ENCODE measurements at regions of chr1 and their contacts with region 1.

Region 1: DNA sequence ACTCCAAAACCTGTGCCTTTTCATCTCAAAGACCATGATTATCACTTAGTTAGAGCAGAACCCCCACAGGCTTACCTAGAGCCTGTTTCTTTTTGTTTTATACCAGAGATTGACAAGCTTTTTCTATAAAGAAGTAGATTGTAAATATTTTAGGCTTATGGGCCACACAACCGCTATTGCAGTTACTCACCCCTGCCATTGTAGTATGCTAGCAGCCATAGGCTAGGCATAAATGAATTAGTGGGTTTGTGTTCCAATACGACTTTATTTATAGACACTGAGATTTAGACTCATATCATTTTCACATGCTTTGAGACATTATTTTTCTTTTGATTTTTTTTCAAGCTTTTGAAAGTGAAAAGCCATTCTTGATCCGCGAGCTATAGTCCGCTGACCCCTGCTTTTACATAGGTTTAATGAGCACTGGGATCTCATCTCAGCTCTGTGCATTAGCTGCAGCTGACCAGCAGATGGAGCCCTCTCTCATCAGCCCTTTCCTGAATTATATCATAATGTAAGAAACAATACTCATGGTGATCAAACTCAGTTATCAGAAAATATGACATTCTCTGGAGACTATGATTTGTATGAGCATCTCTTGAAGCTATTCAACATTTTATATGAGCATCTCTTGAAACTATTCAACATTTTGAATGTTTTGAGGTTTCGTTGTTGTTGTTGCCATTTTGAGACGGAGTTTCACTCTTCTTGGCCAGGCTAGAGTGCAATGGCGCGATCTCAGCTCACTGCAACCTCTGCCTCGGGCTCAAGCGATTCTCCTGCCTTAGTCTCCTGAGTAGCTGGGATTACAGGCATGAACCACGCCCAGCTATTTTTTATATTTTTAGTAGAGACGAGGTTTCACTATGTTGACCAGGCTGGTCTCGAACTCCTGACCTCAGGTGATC is 111.9 kb upstream of the L1TD1 start:
- DNase-seq: peak; percentile 6
- H3K4me3 ChIP-seq: no peak overlapping the region
- H3K27ac ChIP-seq: no peak overlapping the region
- H3K4me1 ChIP-seq: no peaks in the 10 kb centered on the region
- H3K27me3 ChIP-seq: no peaks in the 10 kb centered on the region
- CTCF ChIP-seq: peak; percentile 44 to 63 (median 56)
- POLR2A ChIP-seq: no peak

Region 2: GRCh38 chr1:62038594-62039284 is 44.0 kb before region 1 on chr1:
- intact Hi-C with region 1: no loop called
- DNase-seq: no peak
- H3K4me3 ChIP-seq: no peak overlapping the region
- H3K27ac ChIP-seq: no peak overlapping the region
- H3K4me1 ChIP-seq: no peaks in the 10 kb centered on the region
- H3K27me3 ChIP-seq: no peaks in the 10 kb centered on the region
- CTCF ChIP-seq: no peak
- POLR2A ChIP-seq: no peak

Region 3: DNA sequence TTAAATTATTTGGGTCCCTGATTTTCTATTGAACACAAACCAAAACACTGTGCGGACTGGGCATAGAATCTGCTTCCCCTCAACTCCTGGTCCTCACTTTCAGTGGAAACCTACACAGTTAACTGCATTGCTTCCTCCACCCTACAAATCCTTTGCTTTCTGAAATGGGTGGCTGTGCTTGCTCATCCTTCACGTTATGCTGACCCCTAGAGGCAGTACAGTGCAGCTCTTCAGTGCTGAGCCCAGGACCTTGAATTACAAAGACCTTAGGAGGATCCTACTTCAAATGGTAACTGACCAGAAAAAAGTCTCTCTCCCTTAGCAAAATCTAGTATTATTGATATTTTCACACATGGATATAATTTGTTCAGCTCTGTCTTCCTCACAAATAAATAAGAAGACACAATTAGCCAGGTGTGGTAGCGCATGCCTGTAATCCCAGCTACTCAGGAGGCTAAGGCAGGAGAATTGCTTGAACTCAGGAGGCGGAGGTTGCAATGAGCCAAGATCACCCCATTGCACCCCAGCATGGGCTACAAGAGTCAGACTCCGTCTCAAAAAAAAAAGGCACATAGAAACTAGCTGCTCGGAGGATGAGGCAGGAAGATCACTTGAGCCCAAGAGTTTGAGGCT is 48.5 kb after region 1 on chr1:
- intact Hi-C with region 1: loop called (anchors 5 kb)
- DNase-seq: no peak
- H3K4me3 ChIP-seq: no peak overlapping the region
- H3K27ac ChIP-seq: no peak overlapping the region
- H3K4me1 ChIP-seq: no peaks in the 10 kb centered on the region
- H3K27me3 ChIP-seq: no peaks in the 10 kb centered on the region
- CTCF ChIP-seq: peak in 3 of 4 experiments; percentile 38 to 59 (median 50)
- POLR2A ChIP-seq: no peak